ENCODE measurements at regions of chr2 and their contacts with region 1.

Region 1: GRCh38 chr2:234425619-234426603 is 71.0 kb downstream of the ARL4C start:
- DNase-seq: peak; percentile 80
- H3K4me3 Mint-ChIP-seq: peak overlapping the region; percentile 69
- H3K27ac Mint-ChIP-seq: peak overlapping the region; percentile 95
- H3K4me1 Mint-ChIP-seq: peaks cover 77% of the 10 kb centered on the region
- H3K27me3 Mint-ChIP-seq: no peaks in the 10 kb centered on the region

Region 2: DNA sequence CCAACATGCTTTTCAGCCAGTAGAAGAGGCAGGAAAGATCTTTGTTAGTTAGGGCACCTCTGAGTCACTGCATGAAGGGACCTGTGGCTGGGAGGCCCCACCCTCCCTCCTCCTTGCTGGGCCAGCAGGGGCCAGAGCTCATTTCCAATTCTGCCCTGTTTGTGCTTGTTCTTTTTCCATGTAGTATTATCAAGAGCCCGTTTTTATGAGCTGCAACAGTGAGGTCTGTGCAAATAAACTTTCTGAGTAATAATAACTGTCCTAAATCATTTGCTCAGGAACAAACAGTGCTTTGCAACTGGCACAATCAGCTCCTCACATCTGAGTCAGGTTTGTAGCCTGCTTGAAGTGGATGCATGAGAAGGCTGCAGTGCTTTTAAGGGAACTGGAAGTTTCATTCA is 57.0 kb before region 1 on chr2:
- intact Hi-C with region 1: loop called (anchors 2 kb)
- DNase-seq: peak; percentile 34
- H3K4me3 Mint-ChIP-seq: no peak overlapping the region
- H3K27ac Mint-ChIP-seq: peak overlapping the region; percentile 75
- H3K4me1 Mint-ChIP-seq: peaks cover 66% of the 10 kb centered on the region
- H3K27me3 Mint-ChIP-seq: no peaks in the 10 kb centered on the region

Region 3: DNA sequence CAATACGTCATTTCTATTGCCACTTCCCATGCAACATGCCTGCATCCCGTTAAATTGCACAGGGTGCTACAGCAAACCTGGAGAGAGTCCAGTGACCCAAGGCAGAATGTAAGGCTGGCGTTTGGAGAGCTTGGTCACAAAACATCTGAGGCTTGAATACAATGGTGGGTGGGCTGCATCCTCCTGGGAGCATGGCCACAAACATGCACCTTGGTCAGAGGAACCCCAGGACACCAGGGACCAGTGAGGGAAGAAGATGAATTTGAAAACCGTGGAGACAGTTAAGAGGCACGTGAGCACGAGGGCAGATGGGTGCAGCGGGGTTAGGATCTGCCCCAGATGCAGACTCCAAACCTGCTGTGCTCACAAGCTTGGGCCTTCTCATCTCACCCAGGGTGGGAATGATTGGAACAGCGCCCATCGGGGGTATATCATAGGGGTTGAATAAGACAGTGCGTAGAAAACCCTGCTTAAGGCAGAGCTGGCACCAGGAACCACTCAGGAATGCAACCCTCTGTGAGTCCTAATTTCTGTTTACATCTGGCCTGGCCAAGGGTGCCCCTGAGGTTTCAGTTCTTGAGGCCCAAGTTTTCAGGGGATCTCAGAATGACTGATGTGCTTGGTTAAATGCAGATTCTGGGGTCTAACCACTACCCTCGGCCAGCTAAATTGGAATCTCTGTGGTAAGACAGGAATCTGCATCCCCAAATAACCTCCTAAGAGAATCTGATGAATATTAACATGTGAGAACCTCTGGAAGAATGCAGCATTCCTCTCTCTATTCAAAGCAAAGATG is 26.3 kb before region 1 on chr2:
- intact Hi-C with region 1: loop called (anchors 2 kb)
- DNase-seq: no peak
- H3K4me3 Mint-ChIP-seq: no peak overlapping the region
- H3K27ac Mint-ChIP-seq: peak overlapping the region; percentile 68
- H3K4me1 Mint-ChIP-seq: peaks cover 55% of the 10 kb centered on the region
- H3K27me3 Mint-ChIP-seq: no peaks in the 10 kb centered on the region

Region 4: DNA sequence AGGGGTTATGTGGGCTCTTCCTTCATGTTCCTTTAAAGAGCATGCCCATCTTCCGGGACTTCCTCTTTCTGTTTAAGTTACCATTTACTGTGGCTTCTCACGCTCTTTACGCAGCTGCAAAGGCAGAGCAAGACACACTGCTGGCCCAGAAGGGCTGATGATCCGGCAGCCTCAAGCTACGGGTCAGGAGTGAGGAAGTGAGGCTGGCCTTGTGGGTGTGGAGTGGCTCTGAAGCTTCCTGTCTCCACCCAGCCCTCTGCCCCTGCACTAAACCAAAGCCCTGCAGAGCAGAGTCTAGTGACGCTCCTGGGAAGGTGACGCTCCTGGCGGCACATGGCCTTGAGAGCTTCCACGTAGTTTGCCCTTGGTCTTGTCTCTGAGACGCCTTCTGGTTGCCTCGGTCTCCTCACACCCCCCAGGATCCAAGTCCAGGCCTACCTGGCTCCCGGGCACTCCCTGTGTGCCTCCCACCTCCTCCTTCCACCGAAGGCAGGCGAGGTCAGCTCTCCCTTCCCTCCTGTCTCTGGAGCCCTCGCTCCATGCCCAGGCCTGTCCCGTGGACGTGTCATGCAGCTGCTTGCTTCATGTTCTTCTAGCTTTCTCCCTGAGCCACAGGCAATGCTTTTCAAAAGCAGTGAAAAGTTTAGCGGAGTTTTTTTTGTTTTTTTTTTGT is 20.6 kb after region 1 on chr2:
- intact Hi-C with region 1: loop called (anchors 1 kb)
- DNase-seq: peak; percentile 85
- H3K4me3 Mint-ChIP-seq: peak overlapping the region; percentile 53
- H3K27ac Mint-ChIP-seq: peak overlapping the region; percentile 96
- H3K4me1 Mint-ChIP-seq: peaks cover 77% of the 10 kb centered on the region
- H3K27me3 Mint-ChIP-seq: no peaks in the 10 kb centered on the region

Region 5: DNA sequence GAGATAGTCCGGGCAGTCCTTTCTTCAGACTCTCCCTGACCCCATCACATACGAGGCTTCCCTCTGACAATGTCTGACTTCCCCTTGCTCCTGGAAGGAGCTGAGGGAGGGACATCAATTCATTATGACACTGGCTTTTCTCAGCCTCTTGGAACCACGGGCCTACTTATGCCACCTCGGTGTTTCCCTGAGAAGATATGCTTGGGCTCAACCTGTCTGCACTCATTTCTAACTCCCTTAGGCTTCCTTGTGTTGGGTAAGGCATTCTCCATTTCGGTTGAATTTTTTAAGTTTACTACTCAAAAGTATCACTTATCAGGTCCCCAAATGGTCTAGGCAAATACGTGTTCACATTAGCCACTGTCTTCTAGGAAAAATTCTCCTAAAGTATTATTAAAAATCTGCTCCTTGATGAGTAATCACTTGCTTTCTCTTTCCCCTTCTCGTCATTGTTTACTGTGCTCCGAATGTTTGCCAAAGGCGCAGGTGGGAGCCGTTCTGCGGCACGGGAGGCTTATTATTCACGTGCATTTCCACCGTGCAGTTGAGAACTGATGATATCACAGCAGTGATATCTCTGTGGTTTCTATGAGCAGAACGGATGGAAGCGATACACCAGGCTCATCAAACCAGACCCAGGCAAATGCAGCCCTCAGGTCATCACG is 37.8 kb after region 1 on chr2:
- intact Hi-C with region 1: loop called (anchors 1 kb)
- DNase-seq: peak; percentile 76
- H3K4me3 Mint-ChIP-seq: peak overlapping the region; percentile 81
- H3K27ac Mint-ChIP-seq: peak overlapping the region; percentile 91
- H3K4me1 Mint-ChIP-seq: peaks cover 57% of the 10 kb centered on the region
- H3K27me3 Mint-ChIP-seq: no peaks in the 10 kb centered on the region